CD8-positive, alpha-beta T cell (primary cell): ENCODE measurements at regions of chr11 and their contacts with region 1.

Region 1: DNA sequence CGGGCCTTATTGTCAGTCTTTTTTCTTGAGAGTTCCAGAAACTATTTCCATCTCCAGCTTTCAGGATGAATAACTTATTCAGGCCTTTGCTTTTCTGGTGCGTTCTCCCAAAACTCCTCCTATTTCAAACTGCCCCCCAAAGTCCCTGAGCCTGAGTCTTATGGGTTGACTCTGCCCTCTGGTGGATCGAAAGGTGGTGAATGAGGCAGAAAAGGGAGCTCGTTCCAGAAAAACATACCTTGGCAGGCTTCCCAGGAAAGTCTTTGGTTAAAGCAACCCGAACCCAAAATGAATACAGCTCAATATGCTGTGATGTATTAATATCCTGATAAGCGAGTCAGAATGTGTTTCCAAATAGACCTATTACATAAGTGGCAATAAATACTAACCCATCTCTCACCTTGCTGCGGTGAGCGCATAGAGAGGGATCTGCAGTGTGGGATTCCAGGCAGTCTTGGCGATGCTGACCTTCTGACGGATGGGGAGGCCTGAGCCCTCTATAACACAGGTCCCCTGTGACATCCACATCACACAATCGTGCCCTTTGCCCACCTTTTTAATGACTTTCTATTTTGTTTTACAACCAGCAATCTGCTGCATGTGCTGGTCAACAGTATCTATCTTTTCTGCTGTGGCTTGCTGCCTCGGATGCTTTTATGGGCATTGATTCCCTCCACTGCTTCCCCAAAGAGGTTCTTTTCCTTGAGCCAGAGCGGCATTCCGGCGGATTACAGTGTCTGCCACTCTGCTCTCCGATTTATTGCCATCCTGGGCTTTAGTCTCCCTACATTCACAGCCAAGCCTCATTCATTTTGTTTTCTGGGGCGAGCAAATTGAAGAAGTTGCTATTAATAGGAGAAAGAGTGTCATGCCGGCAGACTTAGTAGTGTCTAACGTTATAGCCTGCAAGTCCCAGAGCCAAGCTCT is 756.8 kb downstream of the NTM start:
- DNase-seq: peak in 1 of 9 experiments; percentile 21
- ATAC-seq: no peak
- H3K4me3 ChIP-seq: no peak overlapping the region
- H3K4me3 Mint-ChIP-seq: no peak overlapping the region
- H3K27ac ChIP-seq: no peak overlapping the region
- H3K27ac Mint-ChIP-seq: no peak overlapping the region
- H3K4me1 ChIP-seq: no peaks in the 10 kb centered on the region
- H3K4me1 Mint-ChIP-seq: no peaks in the 10 kb centered on the region
- H3K27me3 ChIP-seq: peaks cover 0 to 6% of the 10 kb centered on the region in 2 experiments
- H3K27me3 Mint-ChIP-seq: peaks cover 8% of the 10 kb centered on the region
- CTCF ChIP-seq: peak; percentile 22

Region 2: DNA sequence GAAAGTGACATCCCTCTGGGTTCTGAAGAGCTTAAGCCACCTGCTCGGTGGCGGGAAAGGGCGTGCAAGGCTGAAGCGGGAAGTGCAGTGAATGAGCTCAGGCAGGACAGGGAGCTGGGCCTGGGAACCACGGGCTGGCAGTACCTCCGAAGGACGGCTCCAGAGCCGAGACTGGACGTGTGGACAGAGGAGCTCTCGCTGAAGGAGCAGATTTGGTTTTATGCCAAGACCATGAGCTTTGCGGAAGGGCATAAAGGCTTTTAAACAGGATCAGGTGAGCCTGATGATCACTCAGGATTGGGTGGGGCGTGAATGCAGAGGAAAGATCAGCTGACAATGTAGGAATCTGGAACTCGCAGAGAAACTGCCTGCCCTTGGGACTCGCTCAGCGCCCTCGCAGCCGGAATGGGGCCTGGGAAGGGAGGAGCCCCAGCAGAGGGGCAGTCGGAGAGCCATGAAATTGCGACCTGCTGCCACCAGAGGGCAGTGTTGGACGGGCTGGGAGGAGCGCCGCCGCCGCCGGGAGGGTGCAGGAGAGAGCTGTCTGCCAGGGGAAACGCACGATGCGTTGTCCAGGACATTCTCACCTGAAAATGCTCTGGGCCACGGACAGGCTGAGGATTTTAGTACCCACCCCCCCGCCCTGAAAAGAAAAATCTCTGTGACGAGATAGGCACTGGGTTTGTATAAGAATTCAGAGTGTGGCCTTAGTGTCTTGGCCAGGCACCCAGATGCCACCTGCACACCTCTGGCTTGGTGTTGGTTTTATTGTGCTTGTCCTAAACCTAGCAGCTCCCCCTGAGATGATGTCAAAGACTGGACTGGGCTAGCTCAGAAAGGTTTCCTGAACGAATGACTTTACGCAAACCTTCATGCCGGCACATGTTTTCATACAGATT is 432.5 kb before region 1 on chr11:
- CTCF ChIA-PET with region 1: interaction called, 3 read pairs
- POLR2A ChIA-PET with region 1: no interaction called
- intact Hi-C with region 1: loop called in 1 of 2 experiments (anchors 5 kb)
- DNase-seq: peak in 6 of 9 experiments; percentile 26 to 50 (median 37)
- ATAC-seq: no peak
- H3K4me3 ChIP-seq: no peak overlapping the region
- H3K4me3 Mint-ChIP-seq: no peak overlapping the region
- H3K27ac ChIP-seq: no peak overlapping the region
- H3K27ac Mint-ChIP-seq: no peak overlapping the region
- H3K4me1 ChIP-seq: no peaks in the 10 kb centered on the region
- H3K4me1 Mint-ChIP-seq: peaks cover 3% of the 10 kb centered on the region
- H3K27me3 ChIP-seq: no peaks in the 10 kb centered on the region
- H3K27me3 Mint-ChIP-seq: peaks cover 43% of the 10 kb centered on the region
- CTCF ChIP-seq: peak; percentile 53

Region 3: DNA sequence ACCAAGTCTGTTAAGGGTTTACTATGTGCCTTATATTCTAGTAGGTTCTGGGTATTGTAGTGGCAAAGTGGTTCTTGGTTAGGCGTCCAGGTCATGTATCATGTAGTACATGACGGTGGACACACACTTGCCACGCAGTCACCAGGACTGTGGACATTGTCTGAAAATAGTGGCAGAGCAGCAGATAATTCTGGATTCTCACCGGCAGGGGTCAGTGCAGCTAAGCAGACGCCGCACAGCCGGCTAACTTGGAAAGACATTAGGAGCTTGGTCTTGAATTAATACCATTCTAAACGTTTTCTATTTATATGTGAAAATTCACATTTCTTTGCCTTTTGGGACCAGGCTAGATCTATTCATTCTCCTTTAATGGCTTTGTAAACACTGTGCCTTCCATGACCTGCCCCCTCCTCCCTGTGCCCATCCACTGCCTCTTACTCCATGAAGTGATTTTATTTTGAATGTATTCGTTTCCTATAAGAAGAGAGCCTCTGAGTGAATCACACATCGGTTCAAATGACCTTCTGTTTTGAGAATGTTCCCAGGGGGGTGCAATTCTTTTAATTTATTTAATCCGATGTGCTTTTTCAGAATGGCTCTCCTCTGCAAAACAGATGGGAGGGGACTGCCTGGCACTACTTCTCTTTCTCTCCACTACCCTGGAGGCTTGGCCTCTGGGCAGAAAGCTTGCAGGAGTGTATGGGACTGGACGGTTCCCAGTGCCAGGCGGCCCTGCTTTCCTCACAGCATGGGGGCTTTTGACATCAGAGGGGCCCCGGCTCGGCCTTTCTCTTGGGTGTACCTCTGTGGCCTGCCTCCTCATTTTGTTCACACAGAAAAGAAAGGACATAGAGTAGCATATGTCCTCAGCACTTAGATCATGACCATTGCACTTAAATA is 378.8 kb before region 1 on chr11:
- CTCF ChIA-PET with region 1: interaction called, 10 read pairs
- POLR2A ChIA-PET with region 1: no interaction called
- intact Hi-C with region 1: loop called in 1 of 2 experiments (anchors 1 kb)
- DNase-seq: peak in 4 of 9 experiments; percentile 4 to 22 (median 13)
- ATAC-seq: no peak
- H3K4me3 ChIP-seq: no peak overlapping the region
- H3K4me3 Mint-ChIP-seq: no peak overlapping the region
- H3K27ac ChIP-seq: no peak overlapping the region
- H3K27ac Mint-ChIP-seq: no peak overlapping the region
- H3K4me1 ChIP-seq: no peaks in the 10 kb centered on the region
- H3K4me1 Mint-ChIP-seq: no peaks in the 10 kb centered on the region
- H3K27me3 ChIP-seq: no peaks in the 10 kb centered on the region
- H3K27me3 Mint-ChIP-seq: no peaks in the 10 kb centered on the region
- CTCF ChIP-seq: peak; percentile 35

Region 4: GRCh38 chr11:131867457-131868257 is 259.6 kb before region 1 on chr11:
- CTCF ChIA-PET with region 1: interaction called, 8 read pairs
- POLR2A ChIA-PET with region 1: no interaction called
- intact Hi-C with region 1: loop called in 1 of 2 experiments (anchors 5 kb)
- DNase-seq: peak in 1 of 9 experiments; percentile 6
- ATAC-seq: no peak
- H3K4me3 ChIP-seq: no peak overlapping the region
- H3K4me3 Mint-ChIP-seq: no peak overlapping the region
- H3K27ac ChIP-seq: no peak overlapping the region
- H3K27ac Mint-ChIP-seq: no peak overlapping the region
- H3K4me1 ChIP-seq: no peaks in the 10 kb centered on the region
- H3K4me1 Mint-ChIP-seq: no peaks in the 10 kb centered on the region
- H3K27me3 ChIP-seq: no peaks in the 10 kb centered on the region
- H3K27me3 Mint-ChIP-seq: no peaks in the 10 kb centered on the region
- CTCF ChIP-seq: no peak